PC-3 (cell line): ENCODE measurements at regions of chr7 and their contacts with region 1.

Region 1: DNA sequence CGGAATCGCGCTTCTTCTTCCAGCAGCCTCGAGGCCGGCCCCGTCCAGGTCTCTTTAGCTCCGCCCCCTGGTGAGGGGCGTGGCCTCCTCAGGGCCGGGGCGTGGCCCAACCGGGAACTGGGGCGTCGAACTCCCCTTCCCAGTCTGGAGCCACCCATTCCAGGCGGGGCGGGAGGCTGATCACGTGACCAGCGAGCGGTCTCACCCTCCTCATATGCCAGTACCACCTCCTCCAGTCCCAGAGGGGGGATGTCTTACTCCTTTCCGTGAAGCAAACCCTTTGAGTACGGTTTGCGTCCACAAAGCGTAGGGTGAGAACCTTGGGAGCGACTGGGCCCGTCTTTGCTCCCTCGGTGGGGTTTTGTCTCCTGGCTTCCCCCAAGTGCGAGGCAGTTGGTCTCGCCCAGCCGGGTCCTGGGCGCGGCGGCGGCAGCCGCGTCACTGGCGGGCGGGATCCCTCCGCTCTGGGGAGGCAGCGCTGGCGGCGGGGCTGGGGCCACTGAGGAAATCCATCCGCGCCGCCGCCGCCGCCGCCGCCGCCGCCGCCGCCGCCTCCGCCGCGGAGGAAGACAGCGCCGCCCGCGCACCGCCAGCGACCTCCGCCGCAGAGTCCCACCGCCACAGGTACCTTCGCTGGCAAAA is at the start of gene GNB2:
- DNase-seq: peak; percentile 97
- ATAC-seq: peak; percentile 73
- H3K4me3 ChIP-seq: peak within 1 kb of the TSS; percentile 100
- H3K27ac ChIP-seq: peak within 1 kb of the TSS; percentile 91
- H3K4me1 ChIP-seq: no peaks in the 10 kb centered on the region
- H3K27me3 ChIP-seq: no peaks in the 10 kb centered on the region
- CTCF ChIP-seq: no peak
- total RNA-seq, gene GNB2: 164 and 227 TPM in 2 replicates

Region 2: DNA sequence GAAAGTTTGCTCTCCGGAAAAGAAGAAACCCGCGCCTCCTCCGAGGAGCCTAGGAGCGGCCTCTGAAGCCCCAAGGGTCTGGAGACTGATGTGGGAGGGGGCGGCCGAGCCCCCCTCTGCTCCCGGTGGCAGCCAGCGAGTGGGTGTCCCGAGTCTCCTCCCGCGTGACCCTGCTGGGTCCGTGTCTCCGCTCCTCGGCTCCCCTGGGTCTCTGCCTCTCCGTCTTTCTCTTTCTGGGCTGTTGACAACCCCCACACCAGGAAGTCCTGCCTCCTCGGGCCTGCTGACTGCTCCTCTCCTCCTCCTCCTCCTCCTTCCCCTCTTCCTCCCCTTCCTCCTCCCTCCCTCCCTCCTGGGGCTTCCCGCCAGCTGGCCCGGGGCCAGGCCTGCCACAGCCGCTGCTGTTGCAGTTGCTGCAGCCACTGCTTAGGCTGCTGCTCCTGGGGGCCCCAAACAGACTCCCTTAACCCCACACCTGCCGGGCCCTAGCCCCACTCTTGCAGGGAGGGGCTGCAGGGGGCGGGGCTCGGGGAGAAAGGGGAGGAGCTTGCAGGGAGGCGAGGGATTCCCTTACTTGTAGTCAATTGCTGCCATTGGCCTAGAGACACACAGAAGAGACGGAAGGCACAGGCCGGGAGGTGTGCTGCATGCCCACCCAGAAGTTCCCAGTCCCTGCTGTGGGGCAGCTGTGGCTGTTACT is 194.3 kb before region 1 on chr7 and contains the start of gene TSC22D4:
- CTCF ChIA-PET with region 1: interaction called, 11 read pairs
- POLR2A ChIA-PET with region 1: no interaction called
- intact Hi-C with region 1: no loop called
- DNase-seq: peak; percentile 82
- ATAC-seq: peak; percentile 77
- H3K4me3 ChIP-seq: peak within 1 kb of the TSS; percentile 84
- H3K27ac ChIP-seq: no peak within 1 kb of the TSS
- H3K4me1 ChIP-seq: peaks cover 11% of the 10 kb centered on the region; the same call in 1 of the 2 replicates
- H3K27me3 ChIP-seq: no peaks in the 10 kb centered on the region
- CTCF ChIP-seq: no peak
- total RNA-seq, gene TSC22D4: 57.1 and 66.1 TPM in 2 replicates

Region 3: GRCh38 chr7:100604028-100604975 is 69.1 kb before region 1 on chr7:
- CTCF ChIA-PET with region 1: no interaction called
- POLR2A ChIA-PET with region 1: no interaction called
- intact Hi-C with region 1: loop called (anchors 2 kb)
- DNase-seq: peak; percentile 59
- ATAC-seq: peak; percentile 65
- H3K4me3 ChIP-seq: peak overlapping the region; percentile 80
- H3K27ac ChIP-seq: no peak overlapping the region
- H3K4me1 ChIP-seq: peaks cover 24% of the 10 kb centered on the region
- H3K27me3 ChIP-seq: no peaks in the 10 kb centered on the region
- CTCF ChIP-seq: peak; percentile 52

Region 4: GRCh38 chr7:100611974-100612729 is 61.3 kb before region 1 on chr7 and contains the start of gene MOSPD3:
- CTCF ChIA-PET with region 1: interaction called, 3 read pairs
- POLR2A ChIA-PET with region 1: no interaction called
- intact Hi-C with region 1: loop called (anchors 1 kb)
- DNase-seq: peak; percentile 99
- ATAC-seq: peak; percentile 96
- H3K4me3 ChIP-seq: peak within 1 kb of the TSS; percentile 70
- H3K27ac ChIP-seq: peak within 1 kb of the TSS; percentile 23; the same call in 1 of the 2 replicates
- H3K4me1 ChIP-seq: peaks cover 7% of the 10 kb centered on the region; the same call in 1 of the 2 replicates
- H3K27me3 ChIP-seq: no peaks in the 10 kb centered on the region
- CTCF ChIP-seq: no peak
- total RNA-seq, gene MOSPD3: 9.4 and 19.4 TPM in 2 replicates

Region 5: DNA sequence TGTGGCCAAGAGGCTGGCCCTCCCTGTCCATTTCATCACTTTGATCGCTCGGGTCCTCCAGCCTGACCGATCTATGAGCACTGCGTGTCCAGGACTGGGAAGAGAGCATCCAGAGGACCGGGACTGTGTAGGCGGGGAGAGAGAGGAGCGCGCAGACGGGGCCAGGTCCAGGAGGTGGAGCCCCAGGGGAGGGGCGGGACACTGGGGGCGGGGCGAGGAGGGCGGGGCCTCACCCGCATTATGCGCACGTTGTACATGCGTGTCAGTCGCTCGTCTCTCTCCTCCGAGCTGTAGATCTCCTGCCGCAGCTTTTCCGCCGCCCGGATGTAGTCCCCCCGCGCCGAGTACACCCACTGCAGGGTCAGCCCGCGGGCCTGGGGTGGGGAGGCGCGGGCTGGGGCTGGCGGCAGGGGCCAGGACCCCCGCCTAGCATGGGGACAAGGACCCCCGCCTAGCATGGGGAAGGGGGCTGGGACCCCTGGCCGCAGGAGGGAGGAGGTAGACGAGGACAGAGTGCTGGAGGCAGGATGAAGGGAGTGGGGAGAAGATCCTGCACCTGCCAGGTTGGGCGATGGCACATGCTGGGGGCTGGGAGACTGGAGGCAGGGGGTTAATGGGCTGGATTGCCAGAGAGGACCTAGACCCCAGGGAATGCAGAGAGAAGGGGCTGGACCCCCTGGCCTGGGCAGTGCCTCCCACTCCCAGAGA is 46.7 kb before region 1 on chr7:
- CTCF ChIA-PET with region 1: no interaction called
- POLR2A ChIA-PET with region 1: no interaction called
- intact Hi-C with region 1: loop called (anchors 5 kb)
- DNase-seq: peak; percentile 84
- ATAC-seq: peak; percentile 98
- H3K4me3 ChIP-seq: peak overlapping the region; percentile 75
- H3K27ac ChIP-seq: no peak overlapping the region
- H3K4me1 ChIP-seq: peaks cover 6% of the 10 kb centered on the region
- H3K27me3 ChIP-seq: no peaks in the 10 kb centered on the region
- CTCF ChIP-seq: no peak

Region 6: GRCh38 chr7:100662377-100662776 is 11.0 kb before region 1 on chr7:
- CTCF ChIA-PET with region 1: no interaction called
- POLR2A ChIA-PET with region 1: interaction called, 13 read pairs
- intact Hi-C with region 1: no loop called
- DNase-seq: no peak
- ATAC-seq: no peak
- H3K4me3 ChIP-seq: no peak overlapping the region
- H3K27ac ChIP-seq: no peak overlapping the region
- H3K4me1 ChIP-seq: no peaks in the 10 kb centered on the region
- H3K27me3 ChIP-seq: no peaks in the 10 kb centered on the region
- CTCF ChIP-seq: no peak

Region 7: GRCh38 chr7:100763556-100764140 is 90.2 kb after region 1 on chr7:
- CTCF ChIA-PET with region 1: no interaction called
- POLR2A ChIA-PET with region 1: no interaction called
- intact Hi-C with region 1: no loop called
- DNase-seq: no peak
- ATAC-seq: no peak
- H3K4me3 ChIP-seq: no peak overlapping the region
- H3K27ac ChIP-seq: no peak overlapping the region
- H3K4me1 ChIP-seq: no peaks in the 10 kb centered on the region
- H3K27me3 ChIP-seq: no peaks in the 10 kb centered on the region
- CTCF ChIP-seq: no peak